ENCODE measurements at regions of chr11 and their contacts with region 1.

Region 1: DNA sequence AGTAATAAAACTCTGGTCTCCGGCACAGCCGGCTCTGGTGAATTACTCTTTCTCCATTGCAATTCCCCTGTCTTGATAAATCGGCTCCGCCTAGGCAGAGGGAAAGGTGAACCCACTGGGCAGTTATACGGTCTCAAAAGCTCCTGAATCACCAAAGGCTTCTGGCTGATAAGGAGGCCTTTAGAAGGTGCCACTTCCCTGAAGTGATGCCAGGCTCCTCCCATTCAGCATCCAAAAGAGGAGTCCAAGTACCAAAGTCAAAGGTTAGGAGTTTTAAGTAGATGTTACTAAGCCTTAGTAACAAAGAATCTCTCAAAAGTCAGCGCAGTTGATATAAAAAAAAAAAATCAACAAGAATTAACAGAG is 11.8 kb upstream of the ALKBH8 start:
- DNase-seq: no peak
- ATAC-seq: no peak
- H3K4me3 ChIP-seq: no peak overlapping the region
- H3K4me3 Mint-ChIP-seq: no peak overlapping the region
- H3K27ac ChIP-seq: no peak overlapping the region
- H3K27ac Mint-ChIP-seq: no peak overlapping the region
- H3K4me1 ChIP-seq: no peaks in the 10 kb centered on the region
- H3K4me1 Mint-ChIP-seq: no peaks in the 10 kb centered on the region
- H3K27me3 ChIP-seq: no peaks in the 10 kb centered on the region
- H3K27me3 Mint-ChIP-seq: peaks cover 13 to 25% of the 10 kb centered on the region in 2 donors
- CTCF ChIP-seq: no peak

Region 2: GRCh38 chr11:107508201-107508857 is 69.0 kb before region 1 on chr11:
- intact Hi-C with region 1: no loop called
- DNase-seq: no peak
- ATAC-seq: no peak
- H3K4me3 ChIP-seq: no peak overlapping the region
- H3K4me3 Mint-ChIP-seq: no peak overlapping the region
- H3K27ac ChIP-seq: no peak overlapping the region
- H3K27ac Mint-ChIP-seq: no peak overlapping the region
- H3K4me1 ChIP-seq: no peaks in the 10 kb centered on the region
- H3K4me1 Mint-ChIP-seq: no peaks in the 10 kb centered on the region
- H3K27me3 ChIP-seq: no peaks in the 10 kb centered on the region
- H3K27me3 Mint-ChIP-seq: no peaks in the 10 kb centered on the region
- CTCF ChIP-seq: no peak

Region 3: GRCh38 chr11:107651672-107652071 is 74.3 kb after region 1 on chr11:
- intact Hi-C with region 1: no loop called
- DNase-seq: no peak
- ATAC-seq: no peak
- H3K4me3 ChIP-seq: no peak overlapping the region
- H3K4me3 Mint-ChIP-seq: no peak overlapping the region
- H3K27ac ChIP-seq: no peak overlapping the region
- H3K27ac Mint-ChIP-seq: no peak overlapping the region
- H3K4me1 ChIP-seq: no peaks in the 10 kb centered on the region
- H3K4me1 Mint-ChIP-seq: no peaks in the 10 kb centered on the region
- H3K27me3 ChIP-seq: no peaks in the 10 kb centered on the region
- H3K27me3 Mint-ChIP-seq: peaks cover 11 to 18% of the 10 kb centered on the region in 2 donors
- CTCF ChIP-seq: no peak

Region 4: GRCh38 chr11:107683807-107684206 is 106.5 kb after region 1 on chr11:
- intact Hi-C with region 1: loop called (anchors 2 kb)
- DNase-seq: no peak
- ATAC-seq: no peak
- H3K4me3 ChIP-seq: no peak overlapping the region
- H3K4me3 Mint-ChIP-seq: no peak overlapping the region
- H3K27ac ChIP-seq: no peak overlapping the region
- H3K27ac Mint-ChIP-seq: no peak overlapping the region
- H3K4me1 ChIP-seq: no peaks in the 10 kb centered on the region
- H3K4me1 Mint-ChIP-seq: no peaks in the 10 kb centered on the region
- H3K27me3 ChIP-seq: no peaks in the 10 kb centered on the region
- H3K27me3 Mint-ChIP-seq: peaks cover 5 to 6% of the 10 kb centered on the region in 2 donors
- CTCF ChIP-seq: no peak

Measured in natural killer cell (primary cell).